ENCODE measurements at regions of chr2 and their contacts with region 1.

Region 1: GRCh38 chr2:130181325-130181879 is at the start of gene SMPD4:
- DNase-seq: peak; percentile 96
- H3K4me3 Mint-ChIP-seq: peak within 1 kb of the TSS; percentile 95
- H3K27ac Mint-ChIP-seq: peak within 1 kb of the TSS; percentile 89
- H3K4me1 Mint-ChIP-seq: peaks cover 24% of the 10 kb centered on the region
- H3K27me3 Mint-ChIP-seq: no peaks in the 10 kb centered on the region
- CTCF ChIP-seq: no peak
- total RNA-seq, gene SMPD4: 90.1 and 97.8 TPM in 2 replicates

Region 2: DNA sequence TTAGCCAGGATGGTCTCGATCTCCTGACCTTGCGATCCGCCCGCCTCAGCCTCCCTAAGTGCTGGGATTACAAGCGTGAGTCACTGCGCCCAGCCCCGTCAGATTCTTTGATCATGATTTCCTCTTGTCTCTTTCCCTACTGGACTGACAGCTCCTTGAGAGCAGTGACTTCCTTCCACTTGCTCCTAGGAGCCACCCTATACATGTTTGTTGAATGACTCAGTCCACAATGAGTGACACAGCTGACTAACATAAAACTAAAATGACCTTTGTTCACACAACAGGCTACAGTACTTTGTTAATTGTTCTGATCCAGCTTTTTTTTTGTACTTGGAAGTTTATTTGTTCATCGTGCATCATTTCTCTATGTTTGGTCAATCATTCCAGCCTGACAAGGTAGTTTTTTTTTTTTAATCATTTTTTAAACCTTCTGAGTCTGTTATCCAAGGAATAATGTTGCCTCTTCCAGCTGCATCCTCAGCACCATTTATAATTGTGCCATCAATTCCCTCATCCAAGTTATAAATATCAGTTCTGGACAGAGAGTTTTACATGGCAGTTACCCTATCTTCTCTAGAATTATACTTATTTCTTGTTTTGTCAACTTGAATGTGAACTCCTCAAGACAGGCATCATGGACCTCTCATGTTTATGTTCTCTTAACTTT is 59.8 kb after region 1 on chr2:
- CTCF ChIA-PET with region 1: interaction called, 4 read pairs
- intact Hi-C with region 1: loop called (anchors 10 kb)
- DNase-seq: peak; percentile 79
- H3K4me3 Mint-ChIP-seq: peak overlapping the region; percentile 14
- H3K27ac Mint-ChIP-seq: peak overlapping the region; percentile 78
- H3K4me1 Mint-ChIP-seq: peaks cover 14% of the 10 kb centered on the region
- H3K27me3 Mint-ChIP-seq: peaks cover 5% of the 10 kb centered on the region
- CTCF ChIP-seq: no peak

Region 3: GRCh38 chr2:130288461-130289403 is 107.3 kb after region 1 on chr2:
- CTCF ChIA-PET with region 1: interaction called, 6 read pairs
- intact Hi-C with region 1: loop called (anchors 5 kb)
- DNase-seq: peak; percentile 83
- H3K4me3 Mint-ChIP-seq: peak overlapping the region; percentile 61
- H3K27ac Mint-ChIP-seq: no peak overlapping the region
- H3K4me1 Mint-ChIP-seq: no peaks in the 10 kb centered on the region
- H3K27me3 Mint-ChIP-seq: peaks cover 33% of the 10 kb centered on the region
- CTCF ChIP-seq: peak; percentile 64